OCI-LY7 (cell line): ENCODE measurements at regions of chr12 and their contacts with region 1.

Region 1: GRCh38 chr12:103877934-103878510 is 37.0 kb upstream of the NT5DC3 start:
- DNase-seq: peak; percentile 76
- H3K4me3 ChIP-seq: no peak overlapping the region
- H3K27ac ChIP-seq: no peak overlapping the region
- H3K4me1 ChIP-seq: peaks cover 17% of the 10 kb centered on the region
- CTCF ChIP-seq: peak; percentile 93

Region 2: DNA sequence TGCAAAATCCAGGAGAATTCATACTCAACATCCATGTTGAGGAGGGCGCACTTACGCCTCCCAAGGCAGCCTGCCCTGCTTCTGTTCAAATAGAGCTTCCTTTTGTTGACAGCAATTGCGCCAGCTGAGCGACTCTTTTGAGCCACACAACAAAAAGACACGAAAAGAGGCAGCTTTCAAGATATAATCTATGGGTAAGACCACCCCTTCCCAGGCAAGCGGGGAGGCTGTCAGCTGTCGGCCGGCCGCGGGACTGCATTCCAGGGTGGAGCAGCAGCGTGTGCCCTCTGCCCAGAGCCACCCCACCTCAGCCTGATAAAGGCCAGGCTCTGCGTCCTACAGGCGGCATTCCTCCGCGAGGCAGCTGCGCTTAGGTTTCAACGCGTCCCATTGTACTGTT is 306.7 kb before region 1 on chr12:
- CTCF ChIA-PET with region 1: no interaction called
- POLR2A ChIA-PET with region 1: no interaction called
- intact Hi-C with region 1: loop called (anchors 10 kb)
- DNase-seq: no peak
- H3K4me3 ChIP-seq: no peak overlapping the region
- H3K27ac ChIP-seq: no peak overlapping the region
- H3K4me1 ChIP-seq: no peaks in the 10 kb centered on the region
- CTCF ChIP-seq: no peak